ENCODE measurements at regions of chr3 and their contacts with region 1.

Region 1: GRCh38 chr3:23002836-23003741 is 200.0 kb upstream of the UBE2E2 start:
- DNase-seq: peak; percentile 36
- ATAC-seq: no peak
- H3K4me3 ChIP-seq: no peak overlapping the region
- H3K27ac ChIP-seq: no peak overlapping the region
- H3K4me1 ChIP-seq: no peaks in the 10 kb centered on the region; the same call in 1 of the 2 replicates
- H3K27me3 ChIP-seq: peaks cover 5% of the 10 kb centered on the region
- CTCF ChIP-seq: no peak
- POLR2A ChIP-seq: no peak
- RAD21 ChIP-seq: no peak

Region 2: GRCh38 chr3:22966349-22966748 is 36.7 kb before region 1 on chr3:
- CTCF ChIA-PET with region 1: no interaction called
- POLR2A ChIA-PET with region 1: no interaction called
- dilution Hi-C with region 1: no loop called
- in situ Hi-C with region 1: no loop called
- intact Hi-C with region 1: no loop called
- DNase-seq: no peak
- ATAC-seq: no peak
- H3K4me3 ChIP-seq: no peak overlapping the region
- H3K27ac ChIP-seq: no peak overlapping the region
- H3K4me1 ChIP-seq: no peaks in the 10 kb centered on the region
- H3K27me3 ChIP-seq: no peaks in the 10 kb centered on the region
- CTCF ChIP-seq: no peak
- POLR2A ChIP-seq: no peak
- RAD21 ChIP-seq: no peak

Region 3: GRCh38 chr3:23696842-23697241 is 693.8 kb after region 1 on chr3:
- CTCF ChIA-PET with region 1: no interaction called
- POLR2A ChIA-PET with region 1: no interaction called
- dilution Hi-C with region 1: no loop called
- in situ Hi-C with region 1: no loop called
- intact Hi-C with region 1: loop called (anchors 10 kb)
- DNase-seq: peak; percentile 72
- ATAC-seq: no peak
- H3K4me3 ChIP-seq: no peak overlapping the region
- H3K27ac ChIP-seq: no peak overlapping the region
- H3K4me1 ChIP-seq: no peaks in the 10 kb centered on the region
- H3K27me3 ChIP-seq: no peaks in the 10 kb centered on the region; the same call in 1 of the 2 replicates
- CTCF ChIP-seq: no peak
- POLR2A ChIP-seq: no peak
- RAD21 ChIP-seq: no peak